ENCODE measurements at regions of chr3 and their contacts with region 1.

Region 1: DNA sequence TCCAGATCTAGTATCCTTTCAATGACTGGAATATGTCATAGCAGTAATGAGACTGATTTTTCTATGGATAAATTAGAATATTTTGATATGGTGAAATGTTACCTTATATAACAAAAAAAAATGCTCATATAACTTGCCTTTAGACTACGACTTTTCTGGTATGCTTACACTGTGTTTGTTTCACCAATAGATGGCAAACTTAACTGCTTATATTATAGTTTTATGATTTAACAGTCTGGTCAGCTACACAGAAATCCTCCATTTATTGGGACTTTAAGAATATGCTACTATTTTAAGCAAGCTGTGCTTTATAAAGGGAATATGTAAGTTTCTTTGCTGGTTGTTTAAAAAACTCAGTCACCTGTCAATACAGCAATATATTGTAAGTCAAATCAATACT is 205.6 kb downstream of the VGLL3 start:
- DNase-seq: no peak
- H3K4me3 ChIP-seq: no peak overlapping the region
- H3K27ac ChIP-seq: no peak overlapping the region
- H3K4me1 ChIP-seq: peaks cover 6% of the 10 kb centered on the region
- H3K27me3 ChIP-seq: no peaks in the 10 kb centered on the region
- CTCF ChIP-seq: peak; percentile 51 to 55

Region 2: GRCh38 chr3:86990734-86991481 is 205.5 kb after region 1 on chr3 and contains the start of gene VGLL3:
- CTCF ChIA-PET with region 1: no interaction called
- dilution Hi-C with region 1: no loop called
- in situ Hi-C with region 1: no loop called
- intact Hi-C with region 1: loop called (anchors 5 kb)
- DNase-seq: peak; percentile 86
- H3K4me3 ChIP-seq: peak within 1 kb of the TSS; percentile 69 to 87 (median 76)
- H3K27ac ChIP-seq: peak within 1 kb of the TSS; percentile 91
- H3K4me1 ChIP-seq: peaks cover 35% of the 10 kb centered on the region
- H3K27me3 ChIP-seq: no peaks in the 10 kb centered on the region
- CTCF ChIP-seq: peak in 1 of 2 donors; percentile 25
- total RNA-seq, gene VGLL3: 27.9 to 33.2 TPM

Region 3: GRCh38 chr3:87076946-87077345 is 291.6 kb after region 1 on chr3:
- CTCF ChIA-PET with region 1: no interaction called
- dilution Hi-C with region 1: no loop called
- in situ Hi-C with region 1: loop called in 1 of 2 experiments (anchors 5 kb)
- intact Hi-C with region 1: no loop called
- DNase-seq: peak; percentile 71
- H3K4me3 ChIP-seq: no peak overlapping the region
- H3K27ac ChIP-seq: peak overlapping the region; percentile 2
- H3K4me1 ChIP-seq: peaks cover 5% of the 10 kb centered on the region
- H3K27me3 ChIP-seq: no peaks in the 10 kb centered on the region
- CTCF ChIP-seq: no peak

Region 4: DNA sequence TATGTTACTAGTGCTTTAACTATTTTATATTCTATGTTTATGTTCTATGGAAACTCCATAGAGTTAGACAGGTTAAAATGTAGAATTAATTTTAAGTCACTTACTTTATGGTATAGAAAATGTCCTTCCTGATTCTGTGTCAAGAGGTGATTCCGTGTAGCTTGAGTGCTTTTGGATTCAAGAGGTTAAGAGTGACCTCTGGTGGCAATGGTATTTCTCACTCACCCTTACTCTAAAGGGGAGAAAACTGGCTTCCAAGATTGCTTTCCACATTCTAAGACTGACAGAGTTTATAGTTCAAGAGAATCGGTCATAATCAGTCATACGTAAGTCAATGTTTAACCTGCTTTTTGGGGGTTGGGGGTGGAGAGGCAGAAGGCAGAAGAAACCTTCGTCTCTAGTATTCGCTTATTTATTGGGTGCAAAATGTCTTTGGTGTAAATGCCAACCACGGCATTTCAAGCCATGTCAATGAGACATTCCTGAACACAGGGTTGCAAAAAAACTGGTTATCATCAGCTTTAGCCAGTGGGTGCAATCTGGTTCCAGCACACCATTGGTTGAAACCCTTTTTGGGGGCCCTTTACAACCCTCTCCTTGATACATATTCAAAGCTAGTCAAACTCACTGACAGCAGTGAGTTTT is 297.5 kb after region 1 on chr3:
- CTCF ChIA-PET with region 1: no interaction called
- dilution Hi-C with region 1: no loop called
- in situ Hi-C with region 1: loop called (anchors 5 kb)
- intact Hi-C with region 1: loop called (anchors 1 kb)
- DNase-seq: peak; percentile 56
- H3K4me3 ChIP-seq: no peak overlapping the region
- H3K27ac ChIP-seq: no peak overlapping the region
- H3K4me1 ChIP-seq: no peaks in the 10 kb centered on the region
- H3K27me3 ChIP-seq: no peaks in the 10 kb centered on the region
- CTCF ChIP-seq: peak; percentile 54 to 70

Region 5: GRCh38 chr3:87088993-87089841 is 303.8 kb after region 1 on chr3:
- CTCF ChIA-PET with region 1: no interaction called
- dilution Hi-C with region 1: no loop called
- in situ Hi-C with region 1: loop called in 1 of 2 experiments (anchors 5 kb)
- intact Hi-C with region 1: no loop called
- DNase-seq: peak; percentile 56
- H3K4me3 ChIP-seq: peak overlapping the region; percentile 37 to 62 (median 52)
- H3K27ac ChIP-seq: no peak overlapping the region
- H3K4me1 ChIP-seq: peaks cover 11% of the 10 kb centered on the region
- H3K27me3 ChIP-seq: no peaks in the 10 kb centered on the region
- CTCF ChIP-seq: no peak

Region 6: DNA sequence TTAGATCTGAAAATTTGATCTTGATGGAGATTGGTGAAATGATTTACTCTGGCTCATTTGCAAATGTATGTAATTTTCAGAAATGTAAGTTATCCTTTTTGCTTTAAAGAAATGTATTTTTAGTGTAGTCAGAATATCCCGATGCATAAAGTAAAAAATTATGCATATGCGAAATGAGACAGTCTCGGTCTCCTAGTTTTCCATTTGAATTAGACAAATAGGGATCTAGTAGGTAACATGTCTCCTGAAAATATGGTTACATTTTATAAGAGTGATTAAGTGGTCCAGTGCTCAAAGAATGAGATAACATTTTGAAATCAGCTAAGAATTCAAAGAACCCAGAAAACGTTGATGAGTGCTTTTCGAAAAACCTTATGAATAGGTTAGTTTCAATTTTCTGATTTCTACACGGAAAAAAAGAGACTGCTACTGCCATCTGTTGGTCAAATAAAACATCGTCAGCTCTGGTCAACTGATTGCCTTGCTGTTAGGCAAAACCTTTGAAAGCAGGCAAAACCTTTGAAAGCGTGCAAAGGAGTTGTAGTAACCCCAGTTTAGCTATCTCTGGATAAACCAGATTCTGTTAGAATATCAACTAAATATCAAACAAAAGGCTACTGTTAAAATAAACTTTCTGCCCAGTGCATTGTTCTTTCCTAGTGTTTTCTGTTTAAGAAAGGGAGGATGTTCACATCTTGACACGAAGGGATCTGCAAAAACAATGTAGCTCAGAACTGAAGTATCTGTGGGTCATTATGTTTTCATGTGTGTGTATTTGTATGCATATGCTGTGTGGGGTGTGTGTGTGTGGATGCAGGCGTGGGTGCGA is 382.5 kb after region 1 on chr3:
- CTCF ChIA-PET with region 1: no interaction called
- dilution Hi-C with region 1: no loop called
- in situ Hi-C with region 1: loop called in 1 of 2 experiments (anchors 10 kb)
- intact Hi-C with region 1: loop called (anchors 5 kb)
- DNase-seq: peak; percentile 39
- H3K4me3 ChIP-seq: peak overlapping the region; percentile 28 to 47 (median 46)
- H3K27ac ChIP-seq: no peak overlapping the region
- H3K4me1 ChIP-seq: no peaks in the 10 kb centered on the region
- H3K27me3 ChIP-seq: no peaks in the 10 kb centered on the region
- CTCF ChIP-seq: peak; percentile 68 to 71

Region 7: DNA sequence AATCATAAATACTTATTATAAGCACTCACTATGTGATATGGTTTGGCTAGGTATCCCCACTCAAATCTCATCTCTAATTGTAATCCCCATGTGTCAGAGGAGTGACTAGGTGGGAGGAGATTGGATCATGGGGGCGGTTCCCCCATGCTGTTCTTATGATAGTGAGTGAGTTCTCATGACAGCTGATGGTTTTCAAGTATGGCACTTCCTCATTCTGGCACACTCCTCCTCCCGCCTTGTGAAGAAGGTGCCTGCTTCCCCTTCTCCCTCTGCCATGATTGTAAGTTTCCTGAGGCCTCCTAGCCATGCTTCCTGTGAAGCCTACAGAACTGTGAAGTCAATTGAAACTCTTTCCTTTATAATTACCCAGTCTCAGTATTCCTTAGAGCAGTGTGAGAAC is 388.4 kb after region 1 on chr3:
- CTCF ChIA-PET with region 1: no interaction called
- dilution Hi-C with region 1: no loop called
- in situ Hi-C with region 1: loop called in 1 of 2 experiments (anchors 10 kb)
- intact Hi-C with region 1: loop called (anchors 5 kb)
- DNase-seq: no peak
- H3K4me3 ChIP-seq: no peak overlapping the region
- H3K27ac ChIP-seq: no peak overlapping the region
- H3K4me1 ChIP-seq: no peaks in the 10 kb centered on the region
- H3K27me3 ChIP-seq: no peaks in the 10 kb centered on the region
- CTCF ChIP-seq: no peak

Measured in mammary epithelial cell (primary cell).